ENCODE measurements at regions of chr7 and their contacts with region 1.

Region 1: GRCh38 chr7:155796381-155797261 is 15.6 kb downstream of the SHH start:
- DNase-seq: peak in 39 of 42 donors; percentile 23 to 88 (median 72)

Region 2: GRCh38 chr7:155941688-155942087 is 145.1 kb after region 1 on chr7:
- intact Hi-C with region 1: no loop called
- DNase-seq: peak in 2 of 42 donors; percentile 7

Region 3: GRCh38 chr7:156764016-156764669 is 967.5 kb after region 1 on chr7:
- intact Hi-C with region 1: loop called (anchors 5 kb)
- DNase-seq: peak; percentile 50 to 89 (median 76)

Region 4: GRCh38 chr7:156820445-156821067 is 1023.9 kb after region 1 on chr7:
- intact Hi-C with region 1: loop called (anchors 5 kb)
- DNase-seq: no peak

Measured in head of caudate nucleus (tissue), 42 donors.